ENCODE measurements at regions of chr6 and their contacts with region 1.

Region 1: DNA sequence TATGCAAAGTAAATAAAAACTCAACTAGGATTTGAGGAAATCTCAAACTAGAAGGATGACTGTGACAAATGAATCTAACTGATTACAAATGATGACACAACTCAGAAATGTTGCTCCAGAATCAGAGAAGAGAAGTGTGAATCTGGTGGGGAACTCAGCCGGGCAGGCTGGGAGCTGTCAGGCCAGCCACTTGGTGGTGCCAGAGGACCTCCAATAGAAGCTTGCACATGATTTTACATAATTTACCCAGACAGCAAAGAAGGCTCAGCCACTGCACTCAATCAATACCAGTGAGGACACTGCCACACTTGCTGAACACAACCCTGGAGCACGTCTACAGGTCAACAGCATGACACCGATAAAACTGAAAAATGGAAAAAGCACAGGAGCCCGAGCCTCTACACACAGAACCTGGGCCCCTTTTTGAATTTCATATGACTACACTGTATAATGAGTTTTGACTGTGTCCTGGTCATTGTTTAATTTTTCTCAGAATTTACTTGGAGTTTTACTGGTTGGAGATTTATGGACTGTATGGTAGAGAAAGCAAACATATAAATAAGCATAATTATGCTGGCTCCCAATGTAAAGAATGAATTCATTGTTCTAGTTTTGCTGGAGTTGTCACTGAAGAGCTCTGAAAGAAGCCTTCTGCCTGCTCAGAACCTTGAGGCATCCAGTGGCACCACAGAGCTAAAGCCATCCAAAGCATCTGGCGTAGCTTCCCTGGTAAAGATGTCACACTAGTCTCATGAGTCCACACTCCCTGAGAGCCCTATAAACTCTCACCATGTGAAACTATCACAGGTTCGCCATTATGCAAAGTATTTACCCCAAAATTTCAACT is 296.5 kb downstream of the THBS2 start:
- DNase-seq: peak in 4 of 5 donors; percentile 49 to 64 (median 51)
- ATAC-seq: peak; percentile 86 to 94 (median 92)
- H3K4me3 ChIP-seq: no peak overlapping the region
- H3K27ac ChIP-seq: no peak overlapping the region
- H3K4me1 ChIP-seq: peaks cover 0 to 12% (median 0%) of the 10 kb centered on the region in 12 donors
- H3K27me3 ChIP-seq: peaks cover 0 to 18% (median 0%) of the 10 kb centered on the region in 9 donors
- CTCF ChIP-seq: peak; percentile 56 to 90 (median 76)
- POLR2A ChIP-seq: no peak

Region 2: DNA sequence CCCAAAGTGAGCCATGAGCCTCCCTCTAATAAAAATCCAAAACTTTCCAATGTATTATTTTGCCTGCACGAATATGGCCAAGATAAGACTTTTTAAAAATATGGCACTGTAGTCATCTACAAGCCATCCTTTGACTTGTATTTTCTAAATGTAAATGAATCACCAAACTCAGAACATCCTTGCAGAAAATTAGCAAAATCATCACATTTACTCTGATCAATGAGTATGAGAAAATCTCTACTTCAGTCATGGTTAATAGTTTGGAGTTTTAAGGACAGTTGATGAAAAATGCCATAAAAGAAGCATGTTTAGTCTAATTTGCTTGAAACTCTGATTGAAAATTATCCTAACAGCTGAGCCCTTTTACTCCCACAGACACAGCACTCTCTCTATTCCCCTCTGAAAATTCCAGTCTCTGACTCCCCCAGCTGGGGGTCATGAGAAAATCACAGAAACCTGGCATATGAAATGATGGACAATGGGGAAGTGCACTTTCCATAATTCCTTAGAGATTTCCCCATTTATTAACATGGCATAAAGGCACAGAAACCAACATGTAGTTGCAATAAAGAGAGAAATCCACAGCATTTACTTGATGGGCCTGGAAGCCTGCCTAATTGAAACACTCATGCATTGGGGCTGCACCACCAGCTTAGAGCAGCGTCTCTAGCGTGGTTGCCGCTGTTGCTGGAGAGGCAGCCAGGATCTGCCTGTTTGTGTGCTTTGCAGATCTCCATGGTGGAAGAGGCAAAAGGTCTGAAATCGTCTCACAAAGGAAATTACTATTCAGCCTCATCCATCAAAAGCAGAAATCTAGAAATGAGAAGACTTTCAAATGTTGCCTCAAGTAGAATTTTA is 530.7 kb after region 1 on chr6:
- intact Hi-C with region 1: loop called in 2 of 10 experiments (anchors 10 kb)
- DNase-seq: no peak
- ATAC-seq: no peak
- H3K4me3 ChIP-seq: no peak overlapping the region
- H3K27ac ChIP-seq: no peak overlapping the region
- H3K4me1 ChIP-seq: peaks cover 0 to 30% (median 6%) of the 10 kb centered on the region in 12 donors
- H3K27me3 ChIP-seq: no peaks in the 10 kb centered on the region
- CTCF ChIP-seq: peak in 6 of 12 donors; percentile 7 to 37 (median 25)
- POLR2A ChIP-seq: no peak

Region 3: GRCh38 chr6:169520104-169520503 is 563.0 kb after region 1 on chr6:
- intact Hi-C with region 1: loop called in 6 of 10 experiments (anchors 2 to 10 kb)
- DNase-seq: no peak
- ATAC-seq: peak in 1 of 4 donors; percentile 47
- H3K4me3 ChIP-seq: no peak overlapping the region
- H3K27ac ChIP-seq: no peak overlapping the region
- H3K4me1 ChIP-seq: no peaks in the 10 kb centered on the region
- H3K27me3 ChIP-seq: no peaks in the 10 kb centered on the region
- CTCF ChIP-seq: peak in 10 of 12 donors; percentile 15 to 64 (median 44)
- POLR2A ChIP-seq: no peak

Region 4: GRCh38 chr6:169701954-169702839 is 745.1 kb after region 1 on chr6 and contains the starts of genes C6orf120 and WDR27:
- intact Hi-C with region 1: loop called in 2 of 10 experiments (anchors 5 to 10 kb)
- DNase-seq: peak; percentile 96 to 99 (median 97)
- ATAC-seq: peak; percentile 96 to 99 (median 98)
- H3K4me3 ChIP-seq: peak within 1 kb of the TSS; percentile 72 to 99 (median 88)
- H3K27ac ChIP-seq: peak within 1 kb of the TSS; percentile 81 to 97 (median 94)
- H3K4me1 ChIP-seq: peaks cover 0 to 56% (median 30%) of the 10 kb centered on the region in 12 donors
- H3K27me3 ChIP-seq: no peaks in the 10 kb centered on the region
- CTCF ChIP-seq: peak in 2 of 12 donors; percentile 7 to 27
- POLR2A ChIP-seq: peak; percentile 46 to 91
- total RNA-seq, gene C6orf120: 14.3 to 22.9 (median 18.8) TPM
- total RNA-seq, gene WDR27: 2.2 to 12.3 (median 6.6) TPM

Region 5: DNA sequence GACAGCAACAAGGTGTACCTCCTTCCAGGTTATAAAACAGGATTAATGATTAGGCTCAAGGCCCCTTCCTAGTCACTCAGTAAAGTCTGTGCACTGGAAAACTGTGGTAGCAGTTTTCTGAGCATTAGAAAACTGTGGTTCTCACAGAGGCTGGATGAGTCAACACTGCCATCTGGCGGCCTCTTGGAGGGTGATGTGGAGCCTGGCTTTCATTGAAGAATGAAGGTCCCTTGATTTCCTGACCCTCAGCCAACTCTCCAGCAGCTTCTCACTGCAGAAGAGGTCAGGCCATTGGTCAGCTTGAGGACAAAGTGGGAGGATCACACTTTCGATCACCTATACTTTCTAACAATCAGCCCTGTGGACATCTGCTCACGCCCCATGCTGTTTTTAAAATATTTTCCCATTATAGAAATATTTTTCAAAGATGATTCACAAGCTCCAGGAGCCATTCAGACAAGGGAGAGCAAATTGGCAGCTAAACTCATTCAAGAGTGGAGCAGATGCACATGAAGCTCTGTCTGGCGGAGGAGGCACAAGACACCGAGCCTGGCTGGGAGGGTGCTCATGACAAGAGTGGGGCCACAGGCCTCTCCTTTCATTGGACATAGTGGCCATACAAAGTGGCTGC is 1572.8 kb after region 1 on chr6:
- intact Hi-C with region 1: loop called in 3 of 10 experiments (anchors 10 kb)
- DNase-seq: peak; percentile 74 to 80 (median 77)
- ATAC-seq: peak; percentile 45 to 86 (median 86)
- H3K4me3 ChIP-seq: no peak overlapping the region
- H3K27ac ChIP-seq: peak overlapping the region in 1 of 12 donors; percentile 34
- H3K4me1 ChIP-seq: peaks cover 0 to 4% (median 0%) of the 10 kb centered on the region in 12 donors
- H3K27me3 ChIP-seq: no peaks in the 10 kb centered on the region
- CTCF ChIP-seq: peak; percentile 79 to 93 (median 86)
- POLR2A ChIP-seq: no peak

Measured in heart left ventricle (tissue), 16 donors.